B cell (primary cell): ENCODE measurements at regions of chr9 and their contacts with region 1.

Region 1: DNA sequence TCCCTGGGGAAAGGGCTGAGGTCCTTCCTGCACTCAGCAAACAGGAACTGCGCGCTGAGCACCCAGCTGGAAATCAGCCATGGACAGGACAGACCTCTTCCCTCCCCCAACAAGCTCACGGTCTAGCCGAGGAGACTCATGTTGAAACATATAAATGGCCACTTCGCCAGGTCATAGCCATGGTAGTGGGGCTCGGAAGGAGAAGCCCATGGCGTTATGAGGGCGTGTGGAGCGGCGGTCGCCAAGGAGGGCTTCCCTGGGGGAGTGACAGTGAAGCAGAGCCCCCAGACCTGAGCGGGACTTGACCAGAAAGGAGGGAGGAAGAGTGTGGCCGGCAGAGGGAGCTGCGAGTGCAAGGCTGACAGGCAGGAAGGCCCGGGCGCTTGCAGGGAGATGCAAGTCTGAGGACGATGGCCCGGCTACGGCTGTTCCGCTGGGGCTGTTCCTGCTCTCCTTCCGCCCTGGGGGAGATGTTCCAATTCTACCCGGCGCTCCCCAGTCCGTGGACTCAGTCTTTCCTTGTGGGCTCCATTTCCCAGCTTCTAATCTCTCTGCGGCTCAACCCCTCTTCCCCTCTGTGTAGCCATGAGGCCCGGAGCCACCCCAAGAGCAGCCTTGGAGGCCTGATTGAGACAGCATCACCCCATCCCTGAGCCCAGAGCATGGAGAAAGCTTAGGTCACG is 43.9 kb upstream of the PRRC2B start:
- DNase-seq: peak; percentile 86
- ATAC-seq: peak; percentile 99
- H3K4me3 ChIP-seq: no peak overlapping the region
- H3K4me3 Mint-ChIP-seq: peak overlapping the region; percentile 57
- H3K27ac ChIP-seq: no peak overlapping the region
- H3K27ac Mint-ChIP-seq: no peak overlapping the region
- H3K4me1 ChIP-seq: peaks cover 4 to 9% of the 10 kb centered on the region in 2 donors
- H3K4me1 Mint-ChIP-seq: peaks cover 6% of the 10 kb centered on the region
- H3K27me3 ChIP-seq: peaks cover 0 to 4% (median 0%) of the 10 kb centered on the region in 4 experiments
- H3K27me3 Mint-ChIP-seq: peaks cover 3% of the 10 kb centered on the region
- CTCF ChIP-seq: peak; percentile 89

Region 2: GRCh38 chr9:131082774-131083512 is 267.1 kb before region 1 on chr9:
- CTCF ChIA-PET with region 1: no interaction called
- POLR2A ChIA-PET with region 1: no interaction called
- intact Hi-C with region 1: no loop called
- DNase-seq: no peak
- ATAC-seq: no peak
- H3K4me3 ChIP-seq: no peak overlapping the region
- H3K4me3 Mint-ChIP-seq: no peak overlapping the region
- H3K27ac ChIP-seq: no peak overlapping the region
- H3K27ac Mint-ChIP-seq: no peak overlapping the region
- H3K4me1 ChIP-seq: no peaks in the 10 kb centered on the region
- H3K4me1 Mint-ChIP-seq: no peaks in the 10 kb centered on the region
- H3K27me3 ChIP-seq: no peaks in the 10 kb centered on the region
- H3K27me3 Mint-ChIP-seq: peaks cover 3% of the 10 kb centered on the region
- CTCF ChIP-seq: no peak

Region 3: DNA sequence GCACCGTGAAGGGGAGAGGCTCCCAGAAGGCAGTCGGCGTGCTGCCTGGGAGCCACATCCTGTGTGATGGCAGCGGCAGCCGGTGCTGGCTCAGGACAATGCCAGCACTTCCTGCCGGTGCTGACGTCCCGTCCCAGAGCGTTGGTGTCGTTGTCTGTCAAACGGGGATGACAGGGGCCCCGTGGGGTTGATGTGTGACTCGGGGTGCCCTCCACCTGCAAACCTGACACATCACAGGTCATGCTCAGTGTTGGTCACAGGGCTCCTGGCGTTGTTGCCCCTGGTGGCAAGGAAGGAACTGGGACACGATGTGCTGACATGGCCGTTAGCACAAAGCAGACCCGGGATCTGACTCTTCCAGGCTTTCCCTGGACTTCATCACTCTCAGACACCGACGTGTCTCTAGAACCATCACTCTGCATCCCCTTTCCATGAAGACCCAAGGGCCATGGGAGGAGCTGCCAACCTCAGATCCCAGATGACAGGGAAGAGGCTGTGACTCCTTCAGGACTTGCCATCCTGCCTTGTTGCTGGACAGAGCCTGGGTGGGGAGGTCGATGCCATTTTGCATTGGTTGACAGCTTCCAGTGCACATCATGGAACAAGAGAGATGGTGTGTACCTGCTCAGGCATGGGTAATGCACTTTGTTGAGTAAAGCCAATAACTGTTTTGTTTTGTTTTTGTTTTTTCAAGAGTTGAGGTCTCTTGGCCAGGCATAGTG is 39.0 kb before region 1 on chr9:
- CTCF ChIA-PET with region 1: no interaction called
- POLR2A ChIA-PET with region 1: no interaction called
- intact Hi-C with region 1: no loop called
- DNase-seq: peak; percentile 45
- ATAC-seq: peak; percentile 36
- H3K4me3 ChIP-seq: no peak overlapping the region
- H3K4me3 Mint-ChIP-seq: peak overlapping the region; percentile 41
- H3K27ac ChIP-seq: no peak overlapping the region
- H3K27ac Mint-ChIP-seq: no peak overlapping the region
- H3K4me1 ChIP-seq: peaks cover 5 to 7% of the 10 kb centered on the region in 2 donors
- H3K4me1 Mint-ChIP-seq: peaks cover 8% of the 10 kb centered on the region
- H3K27me3 ChIP-seq: peaks cover 0 to 6% (median 0%) of the 10 kb centered on the region in 4 experiments
- H3K27me3 Mint-ChIP-seq: peaks cover 8% of the 10 kb centered on the region
- CTCF ChIP-seq: no peak

Region 4: DNA sequence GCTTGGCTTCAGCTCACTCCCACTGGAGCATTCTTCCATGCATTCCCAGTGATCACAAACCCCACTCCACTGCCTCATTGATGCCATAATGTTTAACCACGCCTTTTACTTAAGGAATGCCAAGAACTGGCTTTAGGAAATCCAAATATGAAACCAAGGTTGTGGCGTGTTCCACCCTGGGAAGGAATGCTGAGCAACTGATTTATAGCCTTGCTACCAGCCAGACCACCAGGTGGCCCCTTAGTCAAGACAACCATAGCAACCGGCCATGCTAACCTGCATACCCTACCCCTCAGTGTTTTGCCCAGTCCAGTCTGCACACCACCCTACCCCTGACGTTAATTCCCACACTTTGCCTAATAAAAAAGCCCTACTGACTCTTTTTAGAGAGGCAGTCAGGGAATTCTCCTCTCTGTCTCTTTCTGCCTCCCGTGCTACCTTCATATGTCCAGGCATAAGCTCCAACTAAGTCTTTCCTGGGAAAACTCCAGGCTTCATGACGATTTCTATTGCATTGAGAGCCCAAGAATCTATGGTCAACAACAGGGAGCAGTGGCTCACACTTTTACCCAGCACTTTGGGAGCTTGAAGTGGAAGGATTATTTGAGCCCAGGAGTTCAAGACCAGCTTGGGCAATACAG is 16.9 kb after region 1 on chr9:
- CTCF ChIA-PET with region 1: interaction called, 17 read pairs
- POLR2A ChIA-PET with region 1: no interaction called
- intact Hi-C with region 1: no loop called
- DNase-seq: peak; percentile 24
- ATAC-seq: no peak
- H3K4me3 ChIP-seq: no peak overlapping the region
- H3K4me3 Mint-ChIP-seq: no peak overlapping the region
- H3K27ac ChIP-seq: no peak overlapping the region
- H3K27ac Mint-ChIP-seq: no peak overlapping the region
- H3K4me1 ChIP-seq: no peaks in the 10 kb centered on the region
- H3K4me1 Mint-ChIP-seq: peaks cover under 1% of the 10 kb centered on the region
- H3K27me3 ChIP-seq: no peaks in the 10 kb centered on the region
- H3K27me3 Mint-ChIP-seq: no peaks in the 10 kb centered on the region
- CTCF ChIP-seq: no peak

Region 5: DNA sequence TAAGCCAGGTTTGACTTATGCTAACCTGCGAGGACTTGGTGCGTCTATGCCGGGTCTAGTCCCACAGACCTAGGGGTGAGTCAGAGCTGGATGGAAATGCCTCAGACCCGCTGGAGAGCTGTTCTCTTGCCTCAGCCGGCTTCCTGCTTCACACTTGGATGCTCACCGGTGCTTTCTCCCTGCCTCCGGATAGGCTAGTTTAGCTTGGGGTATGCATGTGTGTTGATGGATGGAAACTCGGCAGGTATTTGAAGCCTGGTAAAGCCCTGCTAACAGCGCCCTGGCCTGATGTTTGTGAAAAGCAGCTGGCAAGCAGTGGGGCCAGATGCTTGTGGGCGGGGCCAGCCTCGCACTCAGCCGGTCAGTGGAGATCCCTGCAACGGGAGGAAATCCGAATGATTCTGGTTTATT is 73.2 kb after region 1 on chr9:
- CTCF ChIA-PET with region 1: interaction called, 10 read pairs
- POLR2A ChIA-PET with region 1: no interaction called
- intact Hi-C with region 1: no loop called
- DNase-seq: peak; percentile 39
- ATAC-seq: peak; percentile 80
- H3K4me3 ChIP-seq: no peak overlapping the region
- H3K4me3 Mint-ChIP-seq: peak overlapping the region; percentile 34
- H3K27ac ChIP-seq: peak overlapping the region; percentile 46 to 59
- H3K27ac Mint-ChIP-seq: peak overlapping the region; percentile 77
- H3K4me1 ChIP-seq: peaks cover 22 to 36% of the 10 kb centered on the region in 2 donors
- H3K4me1 Mint-ChIP-seq: peaks cover 62% of the 10 kb centered on the region
- H3K27me3 ChIP-seq: no peaks in the 10 kb centered on the region
- H3K27me3 Mint-ChIP-seq: no peaks in the 10 kb centered on the region
- CTCF ChIP-seq: no peak

Region 6: DNA sequence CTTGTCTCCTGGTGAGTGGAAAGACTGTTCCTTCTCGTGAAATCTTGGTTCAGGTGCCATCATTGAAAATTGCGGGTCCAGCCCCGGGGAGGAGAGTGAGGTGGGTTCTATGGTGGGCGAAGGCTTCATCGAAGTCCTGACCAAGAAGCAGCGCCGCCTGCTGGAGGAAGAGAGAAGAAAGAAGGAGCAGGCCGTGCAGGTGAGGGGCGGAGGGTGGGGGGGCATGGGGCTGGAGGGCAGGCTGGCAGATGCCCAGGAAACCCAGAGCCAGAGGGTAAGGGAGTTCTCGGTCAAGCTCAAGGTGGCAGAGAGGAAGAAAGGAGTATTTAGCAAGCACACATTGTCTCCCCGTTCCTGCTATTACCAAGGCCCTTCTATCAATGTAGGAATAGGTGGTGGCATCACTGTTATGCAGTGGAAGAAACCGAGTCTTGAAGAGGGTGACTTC is 128.4 kb after region 1 on chr9:
- CTCF ChIA-PET with region 1: interaction called, 29 read pairs
- POLR2A ChIA-PET with region 1: no interaction called
- intact Hi-C with region 1: loop called (anchors 1 kb)
- DNase-seq: peak; percentile 70
- ATAC-seq: peak; percentile 70
- H3K4me3 ChIP-seq: no peak overlapping the region
- H3K4me3 Mint-ChIP-seq: no peak overlapping the region
- H3K27ac ChIP-seq: no peak overlapping the region
- H3K27ac Mint-ChIP-seq: no peak overlapping the region
- H3K4me1 ChIP-seq: no peaks in the 10 kb centered on the region
- H3K4me1 Mint-ChIP-seq: peaks cover 1% of the 10 kb centered on the region
- H3K27me3 ChIP-seq: no peaks in the 10 kb centered on the region
- H3K27me3 Mint-ChIP-seq: no peaks in the 10 kb centered on the region
- CTCF ChIP-seq: peak; percentile 76